ENCODE measurements at regions of chr1 and their contacts with region 1.

Region 1: DNA sequence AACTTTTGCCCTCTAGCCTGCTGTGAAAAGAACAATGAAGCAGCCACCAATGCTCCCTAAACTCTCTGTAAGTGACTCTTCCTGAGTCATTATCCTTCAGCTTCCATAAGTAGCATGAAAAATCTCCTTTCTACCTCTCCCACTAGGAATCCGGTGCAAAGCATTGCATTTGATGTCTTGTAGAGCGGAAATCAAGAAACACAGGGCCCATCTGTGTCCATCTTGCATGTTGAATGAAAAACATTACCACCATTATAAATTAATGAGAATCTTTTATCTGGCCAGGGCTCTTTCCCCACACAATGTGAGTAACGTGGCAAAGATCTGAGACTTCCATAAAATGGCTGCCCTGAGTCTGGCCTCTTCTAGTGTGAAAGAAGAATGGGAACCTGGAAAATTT is 324.4 kb downstream of the ADGRL2 start:
- DNase-seq: no peak
- H3K4me3 Mint-ChIP-seq: no peak overlapping the region
- H3K27ac Mint-ChIP-seq: no peak overlapping the region
- H3K4me1 Mint-ChIP-seq: no peaks in the 10 kb centered on the region
- H3K27me3 Mint-ChIP-seq: no peaks in the 10 kb centered on the region
- CTCF ChIP-seq: no peak

Region 2: DNA sequence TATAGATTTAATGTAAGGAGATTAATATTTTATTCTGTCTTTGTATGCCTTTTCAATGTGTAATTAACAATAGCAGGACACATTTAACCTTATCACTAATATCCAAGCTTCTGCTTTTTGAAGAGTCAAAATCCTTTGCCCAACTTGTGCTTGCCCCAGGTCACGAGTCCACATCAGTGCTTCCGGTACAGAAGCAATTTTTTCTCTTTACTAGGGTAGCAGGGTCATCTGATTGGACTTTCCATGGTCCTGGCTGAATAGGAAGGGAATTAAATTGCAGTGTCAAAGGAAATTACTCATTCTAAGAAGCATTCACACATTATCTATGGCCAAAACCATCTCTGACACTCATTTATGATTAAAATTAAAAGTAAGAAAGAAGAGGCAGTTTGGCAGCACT is 784.9 kb before region 1 on chr1:
- CTCF ChIA-PET with region 1: no interaction called
- intact Hi-C with region 1: no loop called
- DNase-seq: no peak
- H3K4me3 Mint-ChIP-seq: no peak overlapping the region
- H3K27ac Mint-ChIP-seq: no peak overlapping the region
- H3K4me1 Mint-ChIP-seq: no peaks in the 10 kb centered on the region
- H3K27me3 Mint-ChIP-seq: no peaks in the 10 kb centered on the region
- CTCF ChIP-seq: no peak

Region 3: GRCh38 chr1:81894867-81895266 is 230.3 kb before region 1 on chr1:
- CTCF ChIA-PET with region 1: no interaction called
- intact Hi-C with region 1: no loop called
- DNase-seq: no peak
- H3K4me3 Mint-ChIP-seq: no peak overlapping the region
- H3K27ac Mint-ChIP-seq: no peak overlapping the region
- H3K4me1 Mint-ChIP-seq: peaks cover 20% of the 10 kb centered on the region
- H3K27me3 Mint-ChIP-seq: no peaks in the 10 kb centered on the region
- CTCF ChIP-seq: no peak

Region 4: DNA sequence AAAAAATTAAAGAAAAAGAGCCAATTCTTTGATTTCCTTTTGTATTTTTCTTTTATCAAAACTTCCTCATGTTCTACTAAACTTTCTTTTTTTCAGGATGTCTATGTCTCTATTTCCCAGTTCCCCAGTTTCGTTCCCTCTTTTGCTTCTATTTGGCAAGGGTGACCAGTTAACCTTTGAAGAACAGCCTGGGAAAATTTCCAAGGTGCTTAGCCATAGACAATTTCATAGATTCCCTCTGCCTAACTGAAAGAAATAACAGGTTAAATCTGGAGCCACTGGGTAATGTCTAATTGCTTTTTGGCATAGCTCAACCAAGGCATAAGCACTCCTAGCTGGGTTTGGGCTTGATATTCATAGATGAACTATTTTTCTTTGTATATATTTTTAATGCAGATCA is 52.0 kb before region 1 on chr1:
- CTCF ChIA-PET with region 1: no interaction called
- intact Hi-C with region 1: loop called (anchors 1 kb)
- DNase-seq: no peak
- H3K4me3 Mint-ChIP-seq: no peak overlapping the region
- H3K27ac Mint-ChIP-seq: no peak overlapping the region
- H3K4me1 Mint-ChIP-seq: no peaks in the 10 kb centered on the region
- H3K27me3 Mint-ChIP-seq: no peaks in the 10 kb centered on the region
- CTCF ChIP-seq: no peak

Region 5: GRCh38 chr1:82090104-82090503 is 35.0 kb before region 1 on chr1:
- CTCF ChIA-PET with region 1: no interaction called
- intact Hi-C with region 1: no loop called
- DNase-seq: no peak
- H3K4me3 Mint-ChIP-seq: no peak overlapping the region
- H3K27ac Mint-ChIP-seq: no peak overlapping the region
- H3K4me1 Mint-ChIP-seq: no peaks in the 10 kb centered on the region
- H3K27me3 Mint-ChIP-seq: no peaks in the 10 kb centered on the region
- CTCF ChIP-seq: peak; percentile 42

Region 6: GRCh38 chr1:82343381-82343780 is 218.3 kb after region 1 on chr1:
- CTCF ChIA-PET with region 1: no interaction called
- intact Hi-C with region 1: no loop called
- DNase-seq: no peak
- H3K4me3 Mint-ChIP-seq: no peak overlapping the region
- H3K27ac Mint-ChIP-seq: no peak overlapping the region
- H3K4me1 Mint-ChIP-seq: no peaks in the 10 kb centered on the region
- H3K27me3 Mint-ChIP-seq: no peaks in the 10 kb centered on the region
- CTCF ChIP-seq: no peak

Measured in Calu3 (cell line).